ENCODE measurements at regions of chr11 and their contacts with region 1.

Region 1: GRCh38 chr11:121810291-121810690 is 305.7 kb downstream of the BLID start:
- DNase-seq: no peak
- H3K4me3 ChIP-seq: no peak overlapping the region
- H3K27ac ChIP-seq: peak overlapping the region; percentile 10 to 63 (median 55)
- H3K4me1 ChIP-seq: peaks cover 0 to 9% (median 0%) of the 10 kb centered on the region in 4 donors
- H3K27me3 ChIP-seq: no peaks in the 10 kb centered on the region
- CTCF ChIP-seq: no peak
- EP300 ChIP-seq: no peak
- POLR2A ChIP-seq: no peak

Region 2: DNA sequence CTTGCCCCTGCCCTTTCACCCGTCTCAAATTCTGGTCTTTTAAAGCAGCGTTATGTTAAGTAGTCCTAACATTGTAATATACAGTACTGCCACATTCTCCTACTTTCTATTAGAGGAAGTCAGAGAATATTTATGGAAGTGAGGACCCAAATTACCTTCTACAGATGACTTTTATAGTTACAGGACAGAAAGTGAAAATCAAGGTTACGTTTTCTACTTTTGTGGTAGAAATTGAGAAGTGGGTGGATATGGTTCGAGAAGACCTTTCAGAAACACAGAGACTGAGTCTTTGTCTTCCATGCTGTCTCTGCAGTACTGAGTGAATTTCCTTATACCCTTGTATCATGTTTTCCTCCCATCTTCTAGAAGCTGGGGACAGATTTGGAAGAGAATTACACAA is 500.6 kb before region 1 on chr11:
- in situ Hi-C with region 1: no loop called
- intact Hi-C with region 1: loop called (anchors 10 kb)
- DNase-seq: no peak
- H3K4me3 ChIP-seq: no peak overlapping the region
- H3K27ac ChIP-seq: no peak overlapping the region
- H3K4me1 ChIP-seq: no peaks in the 10 kb centered on the region
- H3K27me3 ChIP-seq: no peaks in the 10 kb centered on the region
- CTCF ChIP-seq: no peak
- EP300 ChIP-seq: no peak
- POLR2A ChIP-seq: no peak

Region 3: DNA sequence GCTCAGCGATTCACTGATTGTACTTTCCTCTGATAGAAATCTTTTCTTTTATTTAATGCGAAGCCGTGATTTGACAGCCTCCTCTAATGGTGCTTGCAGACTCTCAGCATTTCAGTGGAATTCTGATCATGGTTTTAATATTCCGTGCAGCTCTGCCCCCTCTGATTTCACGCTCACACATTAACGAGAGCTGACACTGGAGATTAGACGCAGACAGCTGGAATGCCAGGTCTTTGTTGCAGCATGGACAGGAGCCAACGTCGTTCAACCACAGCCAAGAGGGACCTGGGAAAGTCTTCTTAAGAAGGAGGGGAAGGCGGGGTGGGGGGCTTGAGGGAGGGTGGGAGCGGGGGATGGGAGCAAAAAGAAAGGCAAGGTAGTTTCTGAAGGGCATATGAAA is 119.3 kb after region 1 on chr11:
- in situ Hi-C with region 1: no loop called
- intact Hi-C with region 1: no loop called
- DNase-seq: no peak
- H3K4me3 ChIP-seq: peak overlapping the region in 3 of 4 donors; percentile 13 to 19 (median 18)
- H3K27ac ChIP-seq: peak overlapping the region in 2 of 4 donors; percentile 10 to 21
- H3K4me1 ChIP-seq: peaks cover 0 to 7% (median 2%) of the 10 kb centered on the region in 4 donors
- H3K27me3 ChIP-seq: no peaks in the 10 kb centered on the region
- CTCF ChIP-seq: no peak
- EP300 ChIP-seq: no peak
- POLR2A ChIP-seq: no peak